Motor neuron (in vitro differentiated cells): ENCODE measurements at regions of chr7 and their contacts with region 1.

Region 1: DNA sequence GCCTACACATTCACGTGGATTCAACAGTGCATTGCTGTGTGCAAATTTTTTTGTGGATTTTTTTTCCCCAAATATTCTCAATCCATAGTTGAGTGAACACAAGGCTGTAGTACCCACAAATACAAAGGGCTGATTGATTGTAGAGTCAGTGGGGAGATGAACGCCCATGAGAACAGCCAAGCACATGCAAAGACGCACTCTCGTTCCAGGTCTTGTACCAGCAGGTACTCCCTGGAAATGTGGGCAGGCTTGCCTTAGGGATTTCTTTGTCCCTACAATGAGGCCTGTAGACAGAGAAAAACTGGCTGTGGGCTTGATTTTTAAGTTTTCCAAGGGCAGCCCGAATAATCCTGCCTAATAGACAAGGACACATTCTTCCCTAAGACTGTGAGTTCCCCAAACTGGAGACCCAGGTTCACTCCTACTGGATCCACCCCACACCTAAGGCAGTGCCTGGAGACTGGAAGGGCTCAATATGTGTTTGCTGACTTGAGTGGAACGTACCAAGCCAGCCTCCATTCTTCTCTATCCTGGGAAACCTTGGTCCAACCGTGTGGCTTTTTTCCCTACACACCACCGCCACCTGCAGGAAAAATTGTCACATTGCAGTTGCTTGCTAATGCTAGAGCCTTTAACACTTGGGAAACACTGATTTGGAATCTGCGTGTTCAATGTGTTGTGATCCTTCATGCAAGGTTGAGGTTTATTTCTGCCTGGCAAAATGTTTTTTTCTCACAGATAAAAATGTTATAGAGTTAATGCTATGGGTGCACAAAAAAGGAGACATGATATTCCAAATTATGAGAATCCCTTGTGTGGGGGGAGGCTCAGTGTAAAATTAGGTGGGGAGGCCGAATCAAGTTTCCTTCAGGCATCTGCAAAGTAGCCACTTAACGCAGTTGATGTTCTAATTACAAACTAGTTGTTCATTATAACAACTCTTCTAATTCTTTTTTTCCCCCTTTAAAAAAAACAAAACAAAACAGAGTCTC is 49.3 kb downstream of the PPP1R17 start:
- ATAC-seq: peak; percentile 67 to 94 (median 84)
- H3K4me3 ChIP-seq: no peak overlapping the region
- H3K27ac ChIP-seq: no peak overlapping the region
- H3K4me1 ChIP-seq: peaks cover 6 to 10% of the 10 kb centered on the region in 2 donors

Region 2: GRCh38 chr7:31134246-31135188 is 601.8 kb before region 1 on chr7:
- in situ Hi-C with region 1: loop called in 6 of 9 experiments (anchors 10 to 25 kb)
- ATAC-seq: peak; percentile 99 to 100 (median 100)
- H3K4me3 ChIP-seq: no peak overlapping the region
- H3K27ac ChIP-seq: no peak overlapping the region
- H3K4me1 ChIP-seq: no peaks in the 10 kb centered on the region

Region 3: DNA sequence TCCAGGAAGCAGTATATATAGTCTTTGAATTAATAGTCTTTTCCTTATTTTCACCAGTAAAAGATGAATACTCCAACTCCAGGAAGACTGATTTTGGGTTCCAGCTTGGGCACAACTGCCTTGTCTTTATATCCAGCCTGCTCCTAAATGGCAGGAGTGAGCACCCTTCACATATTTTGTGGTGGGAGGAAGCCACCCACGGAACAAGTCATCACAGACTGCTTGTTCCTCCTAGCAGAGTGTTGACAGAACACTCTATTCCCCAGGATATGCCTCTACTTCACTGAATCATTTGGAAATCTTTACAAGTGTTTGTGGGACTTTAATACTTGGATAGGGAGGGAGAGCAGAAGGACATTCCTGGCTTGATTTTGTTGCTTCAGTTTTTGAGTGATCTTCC is 190.7 kb before region 1 on chr7:
- in situ Hi-C with region 1: no loop called
- ATAC-seq: no peak
- H3K4me3 ChIP-seq: no peak overlapping the region
- H3K27ac ChIP-seq: no peak overlapping the region
- H3K4me1 ChIP-seq: peaks cover 0 to 3% of the 10 kb centered on the region in 2 donors

Region 4: DNA sequence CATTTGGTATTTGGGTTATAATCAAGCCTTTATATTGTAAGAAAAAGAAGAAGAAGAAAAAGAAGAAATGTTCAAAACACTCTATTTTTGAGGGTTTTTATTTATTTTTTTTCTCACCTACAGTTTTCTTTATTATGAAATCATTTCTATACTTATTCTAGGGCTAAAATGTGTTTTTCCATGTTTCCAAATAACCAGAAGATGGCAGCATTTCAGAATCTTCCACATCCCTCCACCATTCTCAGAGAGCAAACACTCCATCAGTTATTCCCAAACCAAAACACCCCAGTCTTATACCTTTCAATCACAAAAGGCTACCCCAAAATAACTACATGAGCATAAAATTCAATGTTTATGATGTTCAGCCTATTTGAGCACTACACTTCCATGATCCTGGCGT is 88.0 kb before region 1 on chr7:
- in situ Hi-C with region 1: loop called in 4 of 9 experiments (anchors 10 kb)
- ATAC-seq: no peak
- H3K4me3 ChIP-seq: no peak overlapping the region
- H3K27ac ChIP-seq: no peak overlapping the region
- H3K4me1 ChIP-seq: peaks cover 5 to 15% of the 10 kb centered on the region in 2 donors